ENCODE measurements at regions of chr5 and their contacts with region 1.

Region 1: DNA sequence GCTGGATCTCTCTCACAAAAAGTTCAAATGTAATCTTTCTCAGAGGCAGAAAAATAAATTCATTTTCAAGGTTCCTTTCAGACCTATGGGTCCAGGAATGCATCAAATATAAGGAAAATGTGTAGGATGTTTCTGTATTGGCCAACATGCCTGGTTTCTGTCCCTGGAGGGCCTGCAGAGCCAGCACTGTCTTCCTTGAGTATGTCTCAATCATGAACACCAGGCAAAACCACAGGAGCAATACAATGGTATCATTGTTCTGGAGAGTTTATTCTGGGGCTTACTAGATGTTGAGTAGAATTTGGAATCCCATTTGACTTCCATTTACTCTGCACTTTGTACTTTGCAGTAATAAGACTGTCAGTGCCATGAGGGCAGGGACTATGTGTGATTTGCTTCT is 23.5 kb downstream of the INSYN2B start:
- DNase-seq: peak; percentile 6
- H3K4me3 Mint-ChIP-seq: no peak overlapping the region
- H3K27ac Mint-ChIP-seq: no peak overlapping the region
- H3K4me1 Mint-ChIP-seq: no peaks in the 10 kb centered on the region
- H3K27me3 Mint-ChIP-seq: peaks cover 61% of the 10 kb centered on the region
- CTCF ChIP-seq: no peak

Region 2: GRCh38 chr5:169778622-169779596 is 177.8 kb before region 1 on chr5:
- CTCF ChIA-PET with region 1: no interaction called
- intact Hi-C with region 1: no loop called
- DNase-seq: no peak
- H3K4me3 Mint-ChIP-seq: no peak overlapping the region
- H3K27ac Mint-ChIP-seq: no peak overlapping the region
- H3K4me1 Mint-ChIP-seq: no peaks in the 10 kb centered on the region
- H3K27me3 Mint-ChIP-seq: peaks cover 76% of the 10 kb centered on the region
- CTCF ChIP-seq: no peak

Region 3: DNA sequence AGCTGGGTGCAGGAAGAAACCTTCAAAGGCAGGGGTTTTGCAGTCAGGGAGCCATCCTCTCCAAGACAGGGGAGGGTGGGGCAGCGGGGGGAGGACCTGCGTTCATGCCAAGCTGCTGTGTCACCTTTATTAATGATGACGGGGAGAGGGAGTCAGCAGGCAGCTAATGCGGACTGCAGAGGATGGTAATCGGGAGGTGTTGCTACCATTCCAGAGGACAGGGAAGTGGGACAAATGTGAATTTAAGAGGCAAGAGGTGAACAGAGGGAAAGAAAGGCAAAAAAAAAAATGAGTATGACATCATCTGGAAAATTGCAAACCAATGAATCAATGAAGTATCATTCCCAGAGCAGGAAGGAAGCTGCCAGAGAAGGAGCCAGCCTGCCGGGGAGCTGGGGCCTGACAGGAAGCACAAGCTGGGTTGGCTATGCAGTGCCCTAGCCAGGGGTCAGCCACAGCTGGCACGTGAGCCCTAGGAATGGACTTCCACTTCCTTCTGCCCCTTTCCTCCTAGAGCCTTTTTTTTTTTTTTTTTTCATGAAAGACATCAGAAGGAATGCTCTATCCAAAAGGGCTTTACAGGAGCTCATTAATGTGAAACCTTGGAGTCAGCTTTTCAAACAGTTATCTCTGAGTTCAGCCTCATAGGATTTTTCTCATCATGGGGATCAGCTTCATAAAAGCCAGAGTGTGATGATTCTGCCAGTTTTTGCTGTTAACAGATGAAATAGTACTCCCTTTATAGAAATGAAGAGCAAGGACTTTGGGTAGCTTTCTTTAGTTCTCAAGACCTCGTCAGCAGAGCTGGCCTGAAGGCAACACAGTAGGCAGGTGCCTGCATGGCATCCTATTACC is 14.4 kb after region 1 on chr5:
- CTCF ChIA-PET with region 1: interaction called, 11 read pairs
- intact Hi-C with region 1: no loop called
- DNase-seq: peak; percentile 29
- H3K4me3 Mint-ChIP-seq: no peak overlapping the region
- H3K27ac Mint-ChIP-seq: no peak overlapping the region
- H3K4me1 Mint-ChIP-seq: peaks cover 9% of the 10 kb centered on the region
- H3K27me3 Mint-ChIP-seq: peaks cover 96% of the 10 kb centered on the region
- CTCF ChIP-seq: no peak

Region 4: DNA sequence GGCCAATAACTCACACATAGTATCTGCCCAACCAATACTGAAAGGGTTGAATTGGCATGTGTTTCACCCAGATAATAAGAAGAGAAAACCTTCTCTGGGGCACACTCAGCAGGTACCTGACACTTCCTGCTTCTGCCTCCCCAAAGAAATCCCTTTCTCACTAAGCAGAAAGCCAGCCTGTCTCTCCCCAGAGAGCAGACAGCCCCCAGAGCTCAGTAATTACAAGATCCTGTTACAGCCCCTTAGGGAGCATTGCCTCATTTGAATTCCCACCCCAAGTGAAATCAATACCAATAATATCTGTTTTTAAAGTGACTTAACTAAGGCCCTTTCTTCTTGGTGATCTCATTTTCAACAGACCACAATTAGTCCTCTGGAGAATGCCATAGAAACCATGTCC is 110.4 kb after region 1 on chr5:
- CTCF ChIA-PET with region 1: no interaction called
- intact Hi-C with region 1: no loop called
- DNase-seq: no peak
- H3K4me3 Mint-ChIP-seq: no peak overlapping the region
- H3K27ac Mint-ChIP-seq: no peak overlapping the region
- H3K4me1 Mint-ChIP-seq: no peaks in the 10 kb centered on the region
- H3K27me3 Mint-ChIP-seq: peaks cover 95% of the 10 kb centered on the region
- CTCF ChIP-seq: no peak

Region 5: GRCh38 chr5:170429014-170429413 is 472.3 kb after region 1 on chr5:
- CTCF ChIA-PET with region 1: no interaction called
- intact Hi-C with region 1: no loop called
- DNase-seq: peak; percentile 15
- H3K4me3 Mint-ChIP-seq: no peak overlapping the region
- H3K27ac Mint-ChIP-seq: no peak overlapping the region
- H3K4me1 Mint-ChIP-seq: no peaks in the 10 kb centered on the region
- H3K27me3 Mint-ChIP-seq: peaks cover 100% of the 10 kb centered on the region
- CTCF ChIP-seq: no peak

Measured in Calu3 (cell line).